AG04449 (cell line): ENCODE measurements at regions of chr12 and their contacts with region 1.

Region 1: DNA sequence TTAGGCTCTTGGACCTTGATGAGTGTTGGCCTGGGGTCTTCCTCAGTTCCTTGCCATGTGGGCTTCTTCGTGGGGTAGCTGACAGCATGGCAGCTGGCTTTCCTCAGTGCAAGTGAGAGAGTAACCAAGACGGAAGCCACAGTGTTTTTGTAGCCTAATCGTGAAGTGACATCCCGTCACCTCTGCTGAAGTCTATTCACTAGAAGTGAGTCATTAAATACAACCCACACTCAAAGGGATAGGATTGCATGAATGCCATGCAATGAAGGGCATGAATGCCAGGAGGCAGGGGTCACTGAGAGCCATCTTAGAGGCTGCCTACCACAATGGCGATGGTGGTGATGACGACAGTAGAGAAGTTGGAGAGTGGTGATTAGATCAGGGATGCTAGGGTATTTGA is 13.5 kb upstream of the ASIC1 start:
- DNase-seq: no peak
- H3K4me3 ChIP-seq: no peak overlapping the region
- CTCF ChIP-seq: no peak

Region 2: GRCh38 chr12:49828133-49829091 is 215.4 kb before region 1 on chr12 and contains the start of gene NCKAP5L:
- CTCF ChIA-PET with region 1: no interaction called
- POLR2A ChIA-PET with region 1: no interaction called
- DNase-seq: peak; percentile 76
- H3K4me3 ChIP-seq: peak within 1 kb of the TSS; percentile 87
- CTCF ChIP-seq: no peak

Region 3: GRCh38 chr12:49983892-49984291 is 60.0 kb before region 1 on chr12:
- CTCF ChIA-PET with region 1: interaction called, 21 read pairs
- POLR2A ChIA-PET with region 1: no interaction called
- DNase-seq: peak; percentile 45
- H3K4me3 ChIP-seq: no peak overlapping the region; the same call in 1 of the 2 replicates
- CTCF ChIP-seq: no peak

Region 4: DNA sequence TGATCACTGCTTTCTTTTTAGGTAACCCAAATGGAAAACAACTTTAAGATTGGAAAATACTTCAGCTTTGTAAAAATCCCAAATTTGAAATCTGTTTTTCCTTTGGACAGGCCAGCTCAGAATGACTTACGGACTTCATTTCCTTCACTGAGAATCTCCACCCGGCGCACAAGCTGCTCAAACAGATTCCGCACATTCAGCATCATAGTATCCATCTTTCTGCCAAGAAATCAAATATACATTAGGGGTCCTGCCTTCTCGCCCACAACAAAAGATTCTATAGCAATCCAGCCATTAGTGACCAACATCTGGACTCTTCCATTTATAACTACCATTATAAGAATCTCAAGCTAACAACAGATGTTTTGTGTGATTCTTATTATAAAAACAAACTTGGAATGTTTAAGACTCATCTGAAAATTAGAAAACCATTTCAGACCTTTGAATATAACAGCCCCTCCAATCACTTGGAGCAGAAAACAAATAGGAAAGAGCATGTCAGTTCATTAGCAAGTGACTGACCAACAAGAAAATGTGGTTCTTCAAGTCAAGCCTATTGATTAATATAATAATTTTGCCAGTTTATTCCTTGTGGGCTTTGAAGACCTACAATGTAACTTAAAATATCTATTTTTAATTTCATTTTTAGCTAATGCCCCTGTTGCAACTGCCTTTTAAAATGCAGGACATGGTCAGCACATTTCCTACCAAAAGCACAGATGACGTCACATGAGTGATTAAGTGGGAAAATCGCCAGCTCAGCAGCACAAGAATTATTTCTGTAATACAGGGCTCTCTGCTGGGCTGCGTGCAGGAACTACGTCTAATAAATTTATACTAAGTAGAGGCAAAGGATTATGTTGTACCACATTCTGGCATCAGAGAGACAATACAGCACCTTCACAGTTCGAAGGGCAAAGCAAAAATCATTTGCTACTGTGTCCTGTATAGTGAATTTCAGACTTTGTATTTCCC is 27.1 kb before region 1 on chr12:
- CTCF ChIA-PET with region 1: interaction called, 52 read pairs
- POLR2A ChIA-PET with region 1: no interaction called
- DNase-seq: no peak
- H3K4me3 ChIP-seq: no peak overlapping the region
- CTCF ChIP-seq: no peak

Region 5: GRCh38 chr12:50025187-50026059 is 18.4 kb before region 1 on chr12 and contains the start of gene RACGAP1:
- CTCF ChIA-PET with region 1: interaction called, 59 read pairs
- POLR2A ChIA-PET with region 1: no interaction called
- DNase-seq: peak; percentile 74
- H3K4me3 ChIP-seq: peak within 1 kb of the TSS; percentile 94
- CTCF ChIP-seq: no peak